ENCODE measurements at regions of chr12 and their contacts with region 1.

Region 1: DNA sequence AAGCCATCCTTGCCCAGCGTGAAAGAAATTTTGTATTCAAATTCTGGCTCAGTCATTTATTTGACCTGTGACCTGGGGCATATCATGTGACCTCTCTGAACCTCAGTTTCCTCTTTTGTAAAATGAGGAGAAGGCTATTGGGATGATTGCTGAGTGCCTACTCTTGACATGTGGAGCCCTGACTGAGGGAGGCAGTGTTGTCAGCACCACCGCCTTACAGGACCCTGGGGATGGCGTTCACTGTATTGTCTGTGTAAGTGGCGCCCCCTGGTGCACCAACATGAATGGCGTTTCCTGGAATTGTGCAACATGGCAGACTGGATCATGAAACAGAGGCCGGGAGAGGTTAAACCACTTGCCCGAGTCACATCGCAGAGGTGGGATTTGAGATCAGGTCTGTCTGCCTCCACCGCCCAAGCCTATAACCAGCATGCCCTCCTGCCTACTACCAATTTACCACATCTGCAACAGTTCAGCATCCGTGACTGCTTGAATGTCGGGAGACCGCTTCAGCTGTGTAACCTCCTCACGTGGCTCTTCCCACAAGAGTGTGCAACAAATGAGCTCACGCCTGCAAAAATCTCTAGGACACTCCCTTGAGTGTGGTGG is 20.1 kb upstream of the CCDC63 start:
- DNase-seq: peak; percentile 61 to 85 (median 77)
- ATAC-seq: peak; percentile 98
- H3K4me3 ChIP-seq: no peak overlapping the region
- H3K4me3 Mint-ChIP-seq: peak overlapping the region in 9 of 10 donors; percentile 35 to 75 (median 58)
- H3K27ac ChIP-seq: no peak overlapping the region
- H3K27ac Mint-ChIP-seq: peak overlapping the region in 8 of 9 donors; percentile 4 to 81 (median 20)
- H3K4me1 ChIP-seq: no peaks in the 10 kb centered on the region
- H3K4me1 Mint-ChIP-seq: peaks cover 0 to 10% (median 6%) of the 10 kb centered on the region in 7 donors
- H3K27me3 ChIP-seq: no peaks in the 10 kb centered on the region
- H3K27me3 Mint-ChIP-seq: peaks cover 0 to 4% (median 0%) of the 10 kb centered on the region in 5 donors

Region 2: DNA sequence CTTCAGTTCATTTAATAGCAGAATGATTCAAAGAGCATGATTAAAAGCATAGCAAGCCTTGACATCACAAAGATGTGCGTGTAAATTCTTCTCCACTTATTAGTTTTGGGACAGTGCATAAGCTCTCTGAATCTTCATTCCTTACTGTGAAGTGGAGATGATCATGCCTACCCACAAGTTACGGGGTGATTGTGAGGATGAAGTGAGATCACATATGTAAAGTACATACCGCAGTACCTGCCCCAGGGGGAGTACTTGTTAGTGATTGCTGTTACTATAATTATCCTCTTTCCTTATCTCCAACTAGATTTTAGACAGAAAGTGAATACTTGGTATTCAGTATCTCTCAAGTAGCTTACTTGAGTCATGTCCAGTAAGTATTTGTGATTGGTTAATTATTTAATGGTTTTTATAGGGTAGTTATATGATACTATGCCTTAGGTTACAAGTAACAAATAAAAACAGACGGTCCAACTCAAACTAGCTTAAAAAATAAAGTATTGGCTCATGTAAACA is 318.6 kb before region 1 on chr12:
- CTCF ChIA-PET with region 1: no interaction called
- POLR2A ChIA-PET with region 1: no interaction called
- intact Hi-C with region 1: loop called (anchors 1 kb)
- DNase-seq: no peak
- ATAC-seq: no peak
- H3K4me3 ChIP-seq: no peak overlapping the region
- H3K4me3 Mint-ChIP-seq: no peak overlapping the region
- H3K27ac ChIP-seq: no peak overlapping the region
- H3K27ac Mint-ChIP-seq: no peak overlapping the region
- H3K4me1 ChIP-seq: no peaks in the 10 kb centered on the region
- H3K4me1 Mint-ChIP-seq: peaks cover 0 to 3% (median 0%) of the 10 kb centered on the region in 7 donors
- H3K27me3 ChIP-seq: no peaks in the 10 kb centered on the region
- H3K27me3 Mint-ChIP-seq: peaks cover 0 to 5% (median 0%) of the 10 kb centered on the region in 5 donors

Region 3: GRCh38 chr12:110555577-110556406 is 270.9 kb before region 1 on chr12:
- CTCF ChIA-PET with region 1: no interaction called
- POLR2A ChIA-PET with region 1: no interaction called
- intact Hi-C with region 1: loop called (anchors 1 to 5 kb)
- DNase-seq: no peak
- ATAC-seq: no peak
- H3K4me3 ChIP-seq: no peak overlapping the region
- H3K4me3 Mint-ChIP-seq: peak overlapping the region in 3 of 10 donors; percentile 5 to 49 (median 18)
- H3K27ac ChIP-seq: no peak overlapping the region
- H3K27ac Mint-ChIP-seq: peak overlapping the region in 6 of 9 donors; percentile 1 to 77 (median 43)
- H3K4me1 ChIP-seq: peaks cover 0 to 18% of the 10 kb centered on the region in 2 donors
- H3K4me1 Mint-ChIP-seq: peaks cover 32 to 75% (median 63%) of the 10 kb centered on the region in 7 donors
- H3K27me3 ChIP-seq: no peaks in the 10 kb centered on the region
- H3K27me3 Mint-ChIP-seq: no peaks in the 10 kb centered on the region

Region 4: GRCh38 chr12:110704748-110705147 is 121.9 kb before region 1 on chr12:
- CTCF ChIA-PET with region 1: interaction called, 3 read pairs
- POLR2A ChIA-PET with region 1: no interaction called
- intact Hi-C with region 1: loop called (anchors 1 kb)
- DNase-seq: peak in 2 of 9 donors; percentile 23 to 25
- ATAC-seq: no peak
- H3K4me3 ChIP-seq: no peak overlapping the region
- H3K4me3 Mint-ChIP-seq: no peak overlapping the region
- H3K27ac ChIP-seq: no peak overlapping the region
- H3K27ac Mint-ChIP-seq: peak overlapping the region in 4 of 9 donors; percentile 0 to 63 (median 50)
- H3K4me1 ChIP-seq: no peaks in the 10 kb centered on the region
- H3K4me1 Mint-ChIP-seq: peaks cover 0 to 4% (median 0%) of the 10 kb centered on the region in 7 donors
- H3K27me3 ChIP-seq: no peaks in the 10 kb centered on the region
- H3K27me3 Mint-ChIP-seq: no peaks in the 10 kb centered on the region

Region 5: GRCh38 chr12:110888256-110888991 is 61.7 kb after region 1 on chr12:
- CTCF ChIA-PET with region 1: no interaction called
- POLR2A ChIA-PET with region 1: no interaction called
- intact Hi-C with region 1: loop called (anchors 1 kb)
- DNase-seq: no peak
- ATAC-seq: no peak
- H3K4me3 ChIP-seq: no peak overlapping the region
- H3K4me3 Mint-ChIP-seq: peak overlapping the region; percentile 51 to 97 (median 92)
- H3K27ac ChIP-seq: no peak overlapping the region
- H3K27ac Mint-ChIP-seq: peak overlapping the region in 5 of 9 donors; percentile 69 to 91 (median 77)
- H3K4me1 ChIP-seq: peaks cover 0 to 4% of the 10 kb centered on the region in 2 donors
- H3K4me1 Mint-ChIP-seq: peaks cover 0 to 8% (median 4%) of the 10 kb centered on the region in 7 donors
- H3K27me3 ChIP-seq: no peaks in the 10 kb centered on the region
- H3K27me3 Mint-ChIP-seq: peaks cover 0 to 12% (median 0%) of the 10 kb centered on the region in 5 donors